MCF 10A (cell line): ENCODE measurements at regions of chr7 and their contacts with region 1.

Region 1: DNA sequence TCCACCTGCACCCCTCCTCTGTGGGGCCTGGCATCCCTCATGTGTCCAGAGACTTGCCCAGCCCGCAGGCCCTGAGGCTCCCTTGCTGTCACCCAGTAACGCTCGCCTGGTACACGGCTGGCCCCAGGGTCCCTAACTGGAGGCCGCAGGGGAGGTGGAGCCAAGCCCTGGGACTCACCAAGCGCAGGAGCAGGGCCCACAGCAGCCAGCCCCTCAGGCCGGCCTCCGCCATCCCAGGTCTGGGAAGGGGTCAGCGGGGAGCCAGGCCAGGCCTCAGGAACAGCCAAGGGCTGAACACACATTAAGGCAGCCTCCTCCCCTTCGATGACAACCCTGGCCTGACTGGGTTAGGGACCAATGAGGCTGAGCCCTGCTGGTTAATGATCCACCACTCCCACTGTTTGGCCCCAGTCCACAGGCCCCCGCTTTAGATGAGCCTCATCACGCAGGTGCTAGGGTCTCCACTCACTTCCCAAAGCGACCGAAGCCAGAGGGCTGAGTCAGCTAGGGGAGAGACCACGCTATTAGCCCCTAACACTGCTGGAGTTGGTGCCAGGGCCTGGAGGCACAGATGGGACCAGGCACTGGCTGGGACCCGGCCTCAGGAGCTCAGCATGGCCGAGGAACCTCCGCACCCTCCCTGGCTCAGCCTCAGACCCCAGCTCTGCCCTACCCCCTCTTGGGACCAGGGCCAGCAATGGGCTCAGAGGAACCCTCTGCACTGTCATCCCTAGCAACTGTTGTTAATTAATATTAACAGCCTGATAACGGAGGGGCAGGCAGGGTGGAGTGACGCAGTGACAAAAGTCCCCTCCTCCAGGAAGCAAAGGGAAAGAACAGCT is at the start of gene NPC1L1:
- DNase-seq: no peak
- H3K4me3 Mint-ChIP-seq: no peak within 1 kb of the TSS
- H3K27ac Mint-ChIP-seq: peak within 1 kb of the TSS; percentile 19
- H3K4me1 Mint-ChIP-seq: peaks cover 17% of the 10 kb centered on the region
- H3K27me3 Mint-ChIP-seq: no peaks in the 10 kb centered on the region
- CTCF ChIP-seq: no peak
- total RNA-seq, gene NPC1L1: 0.07 TPM in 1 of 2 replicates, not detected in the other

Region 2: GRCh38 chr7:44559485-44559884 is 18.2 kb after region 1 on chr7:
- CTCF ChIA-PET with region 1: interaction called, 36 read pairs
- POLR2A ChIA-PET with region 1: interaction called, 15 read pairs
- intact Hi-C with region 1: no loop called
- DNase-seq: no peak
- H3K4me3 Mint-ChIP-seq: no peak overlapping the region
- H3K27ac Mint-ChIP-seq: no peak overlapping the region
- H3K4me1 Mint-ChIP-seq: peaks cover 9% of the 10 kb centered on the region
- H3K27me3 Mint-ChIP-seq: no peaks in the 10 kb centered on the region
- CTCF ChIP-seq: no peak

Region 3: DNA sequence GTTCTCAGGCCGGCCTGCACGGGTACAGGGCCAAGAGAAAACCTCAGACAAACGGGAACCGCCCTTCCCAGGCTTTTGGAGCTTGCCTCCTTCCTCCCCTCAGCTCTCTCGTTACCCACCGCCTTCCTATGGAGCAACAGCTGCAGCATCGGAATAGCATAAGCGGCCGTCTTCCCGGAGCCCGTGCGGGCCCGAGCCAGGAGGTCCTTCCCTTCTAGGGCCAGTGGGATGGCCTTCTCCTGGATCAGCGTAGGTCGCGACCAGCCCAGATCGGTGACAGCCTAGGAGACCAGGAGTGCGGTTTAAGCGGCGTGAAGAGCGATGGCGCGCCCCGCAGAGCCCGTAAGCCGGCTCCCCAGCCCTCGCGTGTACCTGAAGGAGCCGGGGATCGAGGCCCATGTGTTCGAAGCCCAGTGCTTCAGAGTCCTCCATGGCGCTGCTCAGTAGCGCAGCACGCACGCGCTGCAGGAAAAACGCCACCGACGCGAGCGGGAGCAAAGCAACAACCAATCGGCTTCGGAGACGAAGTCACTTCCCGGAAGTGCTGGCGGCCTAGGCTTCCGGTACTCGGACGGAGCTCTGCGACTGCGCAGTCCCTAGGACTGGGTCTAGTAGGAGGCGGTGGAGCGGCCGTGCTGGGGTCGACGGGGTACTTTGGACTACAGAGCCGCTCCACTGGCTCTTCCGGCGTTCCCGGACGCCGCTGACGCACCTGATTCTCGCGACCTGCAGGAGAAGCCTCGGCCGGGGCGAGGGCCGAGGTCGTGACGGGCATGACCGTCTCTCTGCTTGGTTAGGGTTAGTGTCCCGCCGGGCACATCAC is 32.4 kb after region 1 on chr7 and contains the start of gene DDX56:
- CTCF ChIA-PET with region 1: interaction called, 3 read pairs
- POLR2A ChIA-PET with region 1: interaction called, 28 read pairs
- intact Hi-C with region 1: no loop called
- DNase-seq: peak; percentile 94
- H3K4me3 Mint-ChIP-seq: peak within 1 kb of the TSS; percentile 98
- H3K27ac Mint-ChIP-seq: peak within 1 kb of the TSS; percentile 95
- H3K4me1 Mint-ChIP-seq: peaks cover 21% of the 10 kb centered on the region
- H3K27me3 Mint-ChIP-seq: no peaks in the 10 kb centered on the region
- CTCF ChIP-seq: no peak
- total RNA-seq, gene DDX56: 104 and 105 TPM in 2 replicates

Region 4: DNA sequence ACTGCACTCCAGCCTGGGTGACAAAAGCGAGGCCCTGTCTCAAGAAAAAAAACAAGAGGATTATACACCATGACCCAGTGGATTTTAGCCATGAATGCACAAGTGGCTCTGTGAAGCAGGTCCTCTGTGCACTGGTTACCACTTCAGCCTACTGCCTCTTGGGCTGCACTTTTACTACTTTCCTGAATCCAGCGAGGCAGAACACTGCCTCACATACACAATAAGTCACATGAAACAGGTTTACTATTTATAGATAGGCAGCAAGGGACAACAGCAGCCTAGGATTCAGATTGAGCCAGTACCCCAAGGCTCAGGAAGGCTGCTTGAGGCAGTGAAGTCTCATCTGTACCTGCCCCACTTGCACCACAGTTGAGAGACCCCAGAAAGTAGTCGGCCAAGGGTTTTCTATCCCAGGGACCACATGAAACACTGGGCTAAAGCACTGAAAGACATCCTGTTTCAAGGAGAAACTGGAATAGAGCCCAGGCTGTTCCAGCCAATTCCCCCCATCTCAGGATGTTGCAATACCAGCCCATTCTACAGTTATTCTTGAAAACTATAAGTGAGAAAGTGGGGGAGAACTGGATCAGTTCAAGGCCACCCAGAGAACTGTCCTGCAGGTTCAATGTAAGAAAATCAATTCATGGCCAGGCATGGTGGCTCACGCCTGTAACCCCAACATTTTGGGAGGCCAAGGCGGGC is 54.8 kb after region 1 on chr7:
- CTCF ChIA-PET with region 1: no interaction called
- POLR2A ChIA-PET with region 1: no interaction called
- intact Hi-C with region 1: no loop called
- DNase-seq: no peak
- H3K4me3 Mint-ChIP-seq: no peak overlapping the region
- H3K27ac Mint-ChIP-seq: no peak overlapping the region
- H3K4me1 Mint-ChIP-seq: no peaks in the 10 kb centered on the region
- H3K27me3 Mint-ChIP-seq: peaks cover 8% of the 10 kb centered on the region
- CTCF ChIP-seq: no peak